ENCODE measurements at regions of chr6 and their contacts with region 1.

Region 1: GRCh38 chr6:24933868-24934401 is 1.8 kb downstream of the RIPOR2 start:
- DNase-seq: peak; percentile 69
- ATAC-seq: peak; percentile 25
- H3K4me3 Mint-ChIP-seq: peak overlapping the region; percentile 94
- H3K27ac Mint-ChIP-seq: peak overlapping the region; percentile 89
- H3K4me1 Mint-ChIP-seq: peaks cover 66% of the 10 kb centered on the region
- H3K27me3 Mint-ChIP-seq: no peaks in the 10 kb centered on the region

Region 2: GRCh38 chr6:24766680-24767462 is 167.1 kb before region 1 on chr6:
- CTCF ChIA-PET with region 1: no interaction called
- POLR2A ChIA-PET with region 1: no interaction called
- DNase-seq: no peak
- ATAC-seq: peak; percentile 60
- H3K4me3 Mint-ChIP-seq: no peak overlapping the region
- H3K27ac Mint-ChIP-seq: no peak overlapping the region
- H3K4me1 Mint-ChIP-seq: peaks cover 3% of the 10 kb centered on the region
- H3K27me3 Mint-ChIP-seq: no peaks in the 10 kb centered on the region

Region 3: GRCh38 chr6:24818346-24818745 is 115.6 kb before region 1 on chr6:
- CTCF ChIA-PET with region 1: no interaction called
- POLR2A ChIA-PET with region 1: no interaction called
- DNase-seq: no peak
- ATAC-seq: no peak
- H3K4me3 Mint-ChIP-seq: no peak overlapping the region
- H3K27ac Mint-ChIP-seq: no peak overlapping the region
- H3K4me1 Mint-ChIP-seq: peaks cover 6% of the 10 kb centered on the region
- H3K27me3 Mint-ChIP-seq: no peaks in the 10 kb centered on the region

Region 4: GRCh38 chr6:24831771-24832716 is 101.9 kb before region 1 on chr6:
- CTCF ChIA-PET with region 1: no interaction called
- POLR2A ChIA-PET with region 1: no interaction called
- DNase-seq: no peak
- ATAC-seq: no peak
- H3K4me3 Mint-ChIP-seq: no peak overlapping the region
- H3K27ac Mint-ChIP-seq: peak overlapping the region; percentile 9
- H3K4me1 Mint-ChIP-seq: peaks cover 28% of the 10 kb centered on the region
- H3K27me3 Mint-ChIP-seq: no peaks in the 10 kb centered on the region

Region 5: DNA sequence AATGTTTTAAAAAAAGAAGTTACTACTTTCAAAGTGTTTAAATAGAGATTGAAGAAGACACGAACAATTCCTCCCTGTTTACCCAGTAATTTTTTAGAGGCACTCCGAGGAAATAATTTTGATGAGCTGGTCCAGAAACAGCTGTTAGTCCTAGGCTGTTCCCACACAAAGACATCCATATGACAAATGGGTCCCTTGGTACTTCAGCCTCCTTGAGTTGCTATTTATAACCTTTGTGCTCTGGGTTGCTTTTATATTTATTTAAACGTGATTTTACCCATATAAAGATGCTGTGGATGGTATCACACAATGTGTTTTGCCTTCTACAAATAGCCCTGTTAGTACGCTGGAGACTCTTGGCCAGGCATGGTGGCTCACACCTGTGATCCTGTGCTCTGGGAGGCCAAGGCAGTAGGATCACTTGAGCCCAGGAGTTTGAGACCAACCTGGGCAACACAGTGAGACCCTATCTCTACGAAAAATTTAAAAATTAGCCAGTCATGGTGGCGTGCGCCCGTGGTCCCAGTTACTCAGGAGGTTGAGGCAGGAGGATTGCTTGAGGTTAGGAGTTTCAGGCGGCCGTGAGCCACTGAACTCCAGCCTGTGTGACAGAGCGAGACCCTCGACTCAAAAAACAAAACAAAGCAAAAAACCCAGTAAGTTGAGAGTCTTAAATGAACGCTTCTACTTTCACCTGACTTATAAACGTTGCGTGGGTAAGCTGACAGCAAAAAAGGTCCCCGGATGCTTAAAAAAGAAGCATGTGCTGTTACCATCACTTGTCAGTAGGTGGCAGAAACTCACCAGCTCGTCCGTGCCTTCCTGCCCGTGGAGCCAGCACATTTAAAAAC is 78.3 kb before region 1 on chr6:
- CTCF ChIA-PET with region 1: interaction called, 125 read pairs
- POLR2A ChIA-PET with region 1: interaction called, 11 read pairs
- DNase-seq: peak; percentile 84
- ATAC-seq: peak; percentile 49
- H3K4me3 Mint-ChIP-seq: no peak overlapping the region
- H3K27ac Mint-ChIP-seq: peak overlapping the region; percentile 64
- H3K4me1 Mint-ChIP-seq: peaks cover 52% of the 10 kb centered on the region
- H3K27me3 Mint-ChIP-seq: no peaks in the 10 kb centered on the region

Region 6: GRCh38 chr6:24902782-24903181 is 31.2 kb before region 1 on chr6:
- CTCF ChIA-PET with region 1: interaction called, 198 read pairs
- POLR2A ChIA-PET with region 1: interaction called, 4 read pairs
- DNase-seq: no peak
- ATAC-seq: no peak
- H3K4me3 Mint-ChIP-seq: no peak overlapping the region
- H3K27ac Mint-ChIP-seq: peak overlapping the region; percentile 50
- H3K4me1 Mint-ChIP-seq: peaks cover 87% of the 10 kb centered on the region
- H3K27me3 Mint-ChIP-seq: no peaks in the 10 kb centered on the region

Region 7: GRCh38 chr6:24949020-24949569 is 15.2 kb after region 1 on chr6:
- CTCF ChIA-PET with region 1: interaction called, 217 read pairs
- POLR2A ChIA-PET with region 1: interaction called, 195 read pairs
- DNase-seq: peak; percentile 87
- ATAC-seq: peak; percentile 69
- H3K4me3 Mint-ChIP-seq: peak overlapping the region; percentile 46
- H3K27ac Mint-ChIP-seq: peak overlapping the region; percentile 94
- H3K4me1 Mint-ChIP-seq: peaks cover 74% of the 10 kb centered on the region
- H3K27me3 Mint-ChIP-seq: no peaks in the 10 kb centered on the region

Region 8: GRCh38 chr6:24974182-24975171 is 40.5 kb after region 1 on chr6:
- CTCF ChIA-PET with region 1: interaction called, 40 read pairs
- POLR2A ChIA-PET with region 1: interaction called, 5 read pairs
- DNase-seq: no peak
- ATAC-seq: peak; percentile 91
- H3K4me3 Mint-ChIP-seq: peak overlapping the region; percentile 24
- H3K27ac Mint-ChIP-seq: peak overlapping the region; percentile 73
- H3K4me1 Mint-ChIP-seq: peaks cover 20% of the 10 kb centered on the region
- H3K27me3 Mint-ChIP-seq: no peaks in the 10 kb centered on the region

Region 9: GRCh38 chr6:25006565-25007001 is 72.6 kb after region 1 on chr6:
- CTCF ChIA-PET with region 1: interaction called, 34 read pairs
- POLR2A ChIA-PET with region 1: interaction called, 15 read pairs
- DNase-seq: peak; percentile 76
- ATAC-seq: peak; percentile 84
- H3K4me3 Mint-ChIP-seq: peak overlapping the region; percentile 58
- H3K27ac Mint-ChIP-seq: peak overlapping the region; percentile 92
- H3K4me1 Mint-ChIP-seq: peaks cover 82% of the 10 kb centered on the region
- H3K27me3 Mint-ChIP-seq: no peaks in the 10 kb centered on the region

Region 10: GRCh38 chr6:25042036-25042521 is 108.1 kb after region 1 on chr6:
- CTCF ChIA-PET with region 1: interaction called, 12 read pairs
- POLR2A ChIA-PET with region 1: interaction called, 3 read pairs
- DNase-seq: peak; percentile 62
- ATAC-seq: peak; percentile 72
- H3K4me3 Mint-ChIP-seq: peak overlapping the region; percentile 92
- H3K27ac Mint-ChIP-seq: peak overlapping the region; percentile 94
- H3K4me1 Mint-ChIP-seq: peaks cover 60% of the 10 kb centered on the region
- H3K27me3 Mint-ChIP-seq: peaks cover 5% of the 10 kb centered on the region